WTC11 (cell line): ENCODE measurements at regions of chr10 and their contacts with region 1.

Region 1: DNA sequence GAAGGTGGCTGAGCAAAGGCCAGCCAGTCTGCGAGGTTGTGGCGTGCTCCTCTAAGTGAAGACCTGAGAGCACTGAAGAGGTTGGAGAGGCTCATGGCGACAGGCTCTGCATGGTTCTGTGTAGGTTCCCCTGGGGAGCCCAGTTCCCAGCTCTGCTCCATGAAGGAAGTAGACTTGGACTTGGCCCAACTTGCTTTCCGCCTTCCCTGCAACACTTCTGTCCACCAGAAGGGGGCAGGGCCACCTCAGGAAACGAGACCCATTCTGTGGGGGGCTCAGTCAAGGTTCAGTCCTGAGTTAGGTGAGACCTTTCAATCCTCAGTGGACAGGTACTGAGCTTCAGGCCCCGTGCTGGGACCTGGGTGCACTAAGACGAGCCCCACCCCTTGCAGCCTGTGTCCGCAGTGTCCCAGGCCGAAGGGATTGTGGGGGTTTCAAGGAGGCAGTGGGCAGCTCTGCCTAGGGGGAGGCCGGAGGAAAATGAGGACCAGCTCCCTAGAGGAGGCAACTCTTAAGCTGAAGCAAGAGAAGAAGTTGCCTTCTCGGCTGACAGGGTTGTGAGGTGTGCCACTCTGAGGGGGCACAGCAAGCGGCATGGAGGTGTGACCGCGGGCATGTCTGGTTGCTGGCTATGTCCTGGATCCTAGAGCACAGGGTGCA is 15.0 kb upstream of the PCBD1 start:
- DNase-seq: peak; percentile 83
- ATAC-seq: peak; percentile 83
- H3K4me3 Mint-ChIP-seq: no peak overlapping the region
- H3K27ac Mint-ChIP-seq: no peak overlapping the region
- H3K4me1 Mint-ChIP-seq: peaks cover 9% of the 10 kb centered on the region
- H3K27me3 Mint-ChIP-seq: no peaks in the 10 kb centered on the region; the same call in 1 of the 2 replicates
- CTCF ChIP-seq: peak; percentile 90

Region 2: DNA sequence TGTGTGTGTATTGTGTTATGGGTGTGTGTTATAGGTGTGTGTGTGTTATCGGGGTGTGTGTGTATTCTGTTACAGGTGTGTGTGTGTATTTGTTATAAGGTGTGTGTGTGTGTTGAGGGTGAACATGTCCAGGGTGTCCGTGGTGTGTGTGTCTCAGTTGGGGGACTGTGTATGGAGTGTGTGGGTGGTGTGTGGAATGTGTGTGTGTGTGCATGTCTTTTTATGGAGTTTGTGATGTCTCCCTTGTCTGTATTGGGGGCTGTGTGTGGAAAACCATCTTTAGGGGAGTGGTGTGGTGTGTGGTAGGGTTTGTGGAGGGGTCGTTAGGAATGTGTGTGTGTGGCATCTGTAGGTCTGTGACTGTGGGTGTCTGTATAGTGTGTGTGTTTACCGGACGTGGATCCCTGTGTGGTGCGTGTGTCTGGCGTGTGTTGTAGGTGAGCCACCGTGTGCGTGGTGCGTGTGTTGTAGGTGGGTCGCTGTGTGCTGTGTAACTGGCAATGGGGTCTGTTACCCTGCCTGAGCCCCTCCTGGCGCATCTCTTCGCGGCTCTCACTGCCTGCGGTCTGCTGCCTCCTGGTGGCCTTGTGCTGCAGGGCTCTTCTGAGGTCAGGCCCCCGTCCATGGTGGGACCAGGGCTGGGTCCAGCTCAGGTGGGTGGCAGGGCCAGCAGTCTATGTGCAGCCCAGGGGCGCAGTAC is 363.2 kb before region 1 on chr10:
- CTCF ChIA-PET with region 1: no interaction called
- POLR2A ChIA-PET with region 1: no interaction called
- DNase-seq: peak; percentile 77
- ATAC-seq: peak; percentile 63
- H3K4me3 Mint-ChIP-seq: no peak overlapping the region
- H3K27ac Mint-ChIP-seq: no peak overlapping the region
- H3K4me1 Mint-ChIP-seq: peaks cover 16% of the 10 kb centered on the region
- H3K27me3 Mint-ChIP-seq: no peaks in the 10 kb centered on the region
- CTCF ChIP-seq: peak; percentile 72

Region 3: DNA sequence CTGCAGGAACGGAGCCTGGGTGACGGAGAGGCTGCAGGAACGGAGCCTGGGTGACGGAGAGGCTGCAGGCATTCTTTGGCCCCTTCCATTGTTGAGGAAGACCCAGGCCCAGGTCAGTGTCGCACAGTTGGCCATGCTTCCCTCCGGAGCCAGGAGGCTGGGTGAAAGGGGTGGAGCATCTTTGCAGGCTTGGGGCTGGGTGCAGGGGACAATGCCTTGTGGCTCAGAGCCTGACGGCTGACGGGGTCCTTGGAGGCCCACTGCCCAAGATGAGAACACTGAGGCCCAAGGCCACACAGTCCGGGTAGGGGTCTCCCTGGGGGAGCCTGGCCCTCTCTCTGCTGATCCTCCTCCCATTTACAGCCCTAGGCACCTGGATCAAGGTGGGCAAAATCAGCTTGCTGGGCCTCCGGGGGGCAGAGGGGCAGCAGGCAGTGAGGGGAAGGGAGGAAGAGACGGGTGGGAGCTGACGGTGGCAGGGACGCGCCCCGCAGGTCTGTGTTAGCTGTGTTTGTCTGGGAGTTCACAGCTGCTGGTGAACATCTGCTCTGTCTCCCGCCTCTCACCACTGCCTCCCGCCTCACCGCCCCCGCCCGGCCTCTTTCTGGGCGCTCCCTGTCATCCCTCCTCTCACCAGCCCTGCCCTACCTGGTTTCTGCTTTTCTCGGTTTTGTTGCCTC is 15.6 kb after region 1 on chr10:
- CTCF ChIA-PET with region 1: interaction called, 47 read pairs
- POLR2A ChIA-PET with region 1: no interaction called
- DNase-seq: no peak
- ATAC-seq: no peak
- H3K4me3 Mint-ChIP-seq: no peak overlapping the region
- H3K27ac Mint-ChIP-seq: no peak overlapping the region
- H3K4me1 Mint-ChIP-seq: no peaks in the 10 kb centered on the region
- H3K27me3 Mint-ChIP-seq: no peaks in the 10 kb centered on the region; the same call in 1 of the 2 replicates
- CTCF ChIP-seq: no peak

Region 4: GRCh38 chr10:71025535-71025934 is 122.1 kb after region 1 on chr10:
- CTCF ChIA-PET with region 1: interaction called, 12 read pairs
- POLR2A ChIA-PET with region 1: no interaction called
- DNase-seq: no peak
- ATAC-seq: peak; percentile 76
- H3K4me3 Mint-ChIP-seq: no peak overlapping the region
- H3K27ac Mint-ChIP-seq: no peak overlapping the region
- H3K4me1 Mint-ChIP-seq: no peaks in the 10 kb centered on the region
- H3K27me3 Mint-ChIP-seq: no peaks in the 10 kb centered on the region
- CTCF ChIP-seq: no peak

Region 5: GRCh38 chr10:71176661-71177060 is 273.3 kb after region 1 on chr10:
- CTCF ChIA-PET with region 1: interaction called, 12 read pairs
- POLR2A ChIA-PET with region 1: no interaction called
- DNase-seq: peak; percentile 45
- ATAC-seq: peak; percentile 89
- H3K4me3 Mint-ChIP-seq: no peak overlapping the region
- H3K27ac Mint-ChIP-seq: peak overlapping the region; percentile 48; the same call in 1 of the 2 replicates
- H3K4me1 Mint-ChIP-seq: peaks cover 27% of the 10 kb centered on the region
- H3K27me3 Mint-ChIP-seq: peaks cover 11% of the 10 kb centered on the region
- CTCF ChIP-seq: no peak

Region 6: DNA sequence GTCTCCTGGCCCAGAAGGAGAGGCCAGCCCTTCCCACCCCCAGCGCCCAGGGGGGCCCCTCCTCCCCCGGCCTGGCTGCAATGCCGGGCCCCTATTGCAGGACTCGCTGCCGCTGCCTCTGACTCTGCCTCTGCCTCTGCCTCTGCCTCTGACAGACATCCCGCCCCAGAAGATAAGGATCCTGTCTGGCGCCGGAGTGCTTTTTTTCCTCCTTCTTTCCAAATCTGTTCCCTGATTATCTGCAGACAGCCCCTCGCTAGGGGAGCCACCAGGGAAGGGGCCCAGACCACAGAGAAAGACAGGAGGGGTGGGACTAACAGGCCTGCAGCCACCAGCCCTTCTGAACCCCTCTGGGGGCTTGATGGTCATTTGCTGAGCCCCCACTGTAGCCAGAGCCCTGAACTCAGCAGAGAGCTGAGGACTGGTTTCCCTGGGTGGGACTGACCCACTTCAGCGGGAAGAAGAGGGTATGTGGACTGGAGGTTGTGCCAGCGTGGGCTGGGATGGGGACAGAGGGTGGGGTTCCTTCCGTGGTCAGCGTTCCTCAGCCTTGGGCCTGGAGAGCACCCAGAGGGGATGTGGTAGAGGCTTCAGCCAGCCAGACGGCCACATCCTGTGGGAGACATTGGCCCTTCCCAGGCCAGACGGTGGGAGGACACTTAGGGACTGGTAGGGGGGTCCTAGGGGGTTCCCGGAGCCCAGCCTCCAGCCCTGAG is 331.7 kb after region 1 on chr10:
- CTCF ChIA-PET with region 1: interaction called, 10 read pairs
- POLR2A ChIA-PET with region 1: no interaction called
- DNase-seq: no peak
- ATAC-seq: no peak
- H3K4me3 Mint-ChIP-seq: no peak overlapping the region
- H3K27ac Mint-ChIP-seq: no peak overlapping the region
- H3K4me1 Mint-ChIP-seq: peaks cover 70% of the 10 kb centered on the region
- H3K27me3 Mint-ChIP-seq: no peaks in the 10 kb centered on the region
- CTCF ChIP-seq: no peak

Region 7: DNA sequence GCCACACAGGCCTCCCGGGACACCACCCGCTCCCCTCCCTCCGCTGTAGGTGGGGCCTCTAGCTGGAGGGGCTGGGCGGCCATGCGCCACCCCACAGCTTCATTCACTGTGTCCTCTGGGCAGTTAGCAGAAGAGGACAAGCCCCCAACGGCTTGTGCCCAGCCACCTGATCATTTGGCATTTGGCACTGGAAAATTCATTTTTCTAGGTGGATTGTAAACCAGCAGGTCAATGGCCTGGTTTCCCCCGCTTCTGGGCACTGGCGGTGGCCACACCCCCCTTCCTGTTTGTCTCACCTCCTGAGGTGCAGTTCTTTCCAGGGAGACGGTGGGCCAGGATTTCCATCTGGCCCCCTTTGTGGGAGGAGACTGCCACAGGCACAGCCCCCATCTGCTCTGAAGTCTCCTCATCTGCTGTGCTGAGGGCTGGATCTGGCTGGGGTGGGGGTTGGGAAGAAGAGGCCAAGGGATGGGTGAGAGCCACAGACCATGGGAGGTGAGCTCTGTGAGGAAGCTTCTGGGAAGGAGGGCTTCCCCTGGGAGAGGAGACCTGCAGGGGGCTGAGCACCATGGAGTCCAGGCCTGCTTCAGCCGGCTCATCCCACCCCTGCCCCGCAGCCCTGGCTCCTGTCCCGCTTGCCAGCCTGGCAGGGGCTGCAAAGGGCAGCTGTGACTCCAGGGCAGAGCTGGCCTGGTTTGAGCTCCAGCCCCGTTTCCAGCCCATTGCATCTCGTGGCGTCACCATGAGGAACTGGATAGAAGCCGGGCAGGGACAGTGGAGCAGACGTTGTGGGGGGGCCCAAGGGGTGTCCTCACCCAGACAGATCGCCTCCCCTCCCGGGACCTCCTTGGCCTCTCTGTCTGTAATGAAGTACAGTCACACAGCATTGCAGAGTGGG is 375.5 kb after region 1 on chr10:
- CTCF ChIA-PET with region 1: interaction called, 35 read pairs
- POLR2A ChIA-PET with region 1: no interaction called
- DNase-seq: peak; percentile 47
- ATAC-seq: peak; percentile 78
- H3K4me3 Mint-ChIP-seq: no peak overlapping the region
- H3K27ac Mint-ChIP-seq: no peak overlapping the region
- H3K4me1 Mint-ChIP-seq: peaks cover 44% of the 10 kb centered on the region
- H3K27me3 Mint-ChIP-seq: no peaks in the 10 kb centered on the region
- CTCF ChIP-seq: no peak